ENCODE measurements at regions of chr1 and their contacts with region 1.

Region 1: DNA sequence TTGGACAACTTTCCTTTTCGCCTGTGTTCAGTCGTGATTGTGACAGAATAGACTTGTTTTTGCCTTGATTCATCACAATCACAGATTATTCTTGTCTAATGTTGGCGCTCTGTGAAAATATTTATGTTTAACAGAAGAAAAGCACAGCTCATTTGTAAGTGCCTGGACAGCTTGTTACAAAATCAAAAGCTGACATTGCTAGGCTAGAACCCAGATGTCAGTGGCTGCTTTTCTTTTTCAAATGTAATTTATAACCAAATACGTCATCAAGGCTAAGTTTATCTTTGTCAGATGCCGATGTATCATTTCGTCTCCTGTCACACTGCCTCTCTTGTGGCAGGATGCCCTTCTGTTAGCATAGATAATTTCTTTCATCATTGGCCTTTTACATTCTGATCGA is 1227.3 kb downstream of the PLA2G4A start:
- DNase-seq: no peak
- ATAC-seq: no peak
- H3K4me3 ChIP-seq: no peak overlapping the region
- H3K27ac ChIP-seq: no peak overlapping the region
- H3K4me1 ChIP-seq: no peaks in the 10 kb centered on the region
- H3K27me3 ChIP-seq: no peaks in the 10 kb centered on the region
- CTCF ChIP-seq: no peak

Region 2: GRCh38 chr1:187985897-187986654 is 69.9 kb before region 1 on chr1:
- intact Hi-C with region 1: no loop called
- DNase-seq: no peak
- ATAC-seq: no peak
- H3K4me3 ChIP-seq: no peak overlapping the region
- H3K27ac ChIP-seq: no peak overlapping the region
- H3K4me1 ChIP-seq: no peaks in the 10 kb centered on the region
- H3K27me3 ChIP-seq: no peaks in the 10 kb centered on the region
- CTCF ChIP-seq: no peak

Region 3: GRCh38 chr1:189654906-189655305 is 1598.9 kb after region 1 on chr1:
- intact Hi-C with region 1: loop called in 1 of 10 experiments (anchors 5 kb)
- DNase-seq: no peak
- ATAC-seq: no peak
- H3K4me3 ChIP-seq: no peak overlapping the region
- H3K27ac ChIP-seq: no peak overlapping the region
- H3K4me1 ChIP-seq: no peaks in the 10 kb centered on the region
- H3K27me3 ChIP-seq: no peaks in the 10 kb centered on the region
- CTCF ChIP-seq: no peak

Measured in heart right ventricle (tissue), 16 donors.